Left cardiac atrium (tissue), 4 donors: ENCODE measurements at regions of chr7 and their contacts with region 1.

Region 1: DNA sequence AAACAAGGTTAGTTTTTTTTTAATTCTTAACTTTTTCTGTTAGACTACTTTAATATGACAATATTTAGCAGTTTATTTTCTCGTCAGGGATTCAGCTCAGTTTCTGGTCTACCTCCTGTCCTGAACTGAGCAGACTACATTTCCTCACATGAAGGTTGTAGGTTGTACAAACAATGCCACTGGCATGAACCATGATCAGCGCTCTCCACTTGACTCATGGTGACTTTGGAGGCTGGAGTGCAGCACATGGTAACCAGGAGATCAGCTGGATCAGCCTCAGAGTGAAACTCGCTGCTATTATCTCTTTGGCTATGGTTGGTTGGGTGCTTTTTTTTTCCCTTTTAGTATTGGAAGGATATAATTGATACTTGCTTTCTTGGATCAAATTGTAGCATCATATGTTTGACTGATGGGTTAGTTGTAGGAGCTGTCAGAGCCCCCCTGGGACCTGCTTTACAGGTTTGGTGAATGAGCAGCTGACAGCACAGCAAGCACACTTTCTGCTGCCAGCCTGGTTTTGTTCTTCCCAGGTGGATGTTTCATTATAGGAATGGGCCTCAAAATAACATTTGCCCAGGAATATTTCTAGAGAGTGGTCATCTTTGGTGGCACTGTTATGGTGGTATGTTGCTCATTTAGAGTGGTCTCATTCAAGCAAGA is 556.4 kb downstream of the AUTS2 start:
- DNase-seq: no peak
- ATAC-seq: no peak

Region 2: GRCh38 chr7:70060298-70061068 is 94.2 kb before region 1 on chr7:
- intact Hi-C with region 1: loop called in 1 of 2 experiments (anchors 10 kb)
- DNase-seq: no peak
- ATAC-seq: no peak